ENCODE measurements at regions of chr17 and their contacts with region 1.

Region 1: GRCh38 chr17:82882715-82883418 is 43.0 kb upstream of the ZNF750 start:
- DNase-seq: no peak
- H3K4me3 ChIP-seq: no peak overlapping the region
- H3K27ac ChIP-seq: no peak overlapping the region
- H3K4me1 ChIP-seq: peaks cover 14% of the 10 kb centered on the region
- H3K27me3 ChIP-seq: no peaks in the 10 kb centered on the region
- CTCF ChIP-seq: no peak
- POLR2A ChIP-seq: no peak

Region 2: DNA sequence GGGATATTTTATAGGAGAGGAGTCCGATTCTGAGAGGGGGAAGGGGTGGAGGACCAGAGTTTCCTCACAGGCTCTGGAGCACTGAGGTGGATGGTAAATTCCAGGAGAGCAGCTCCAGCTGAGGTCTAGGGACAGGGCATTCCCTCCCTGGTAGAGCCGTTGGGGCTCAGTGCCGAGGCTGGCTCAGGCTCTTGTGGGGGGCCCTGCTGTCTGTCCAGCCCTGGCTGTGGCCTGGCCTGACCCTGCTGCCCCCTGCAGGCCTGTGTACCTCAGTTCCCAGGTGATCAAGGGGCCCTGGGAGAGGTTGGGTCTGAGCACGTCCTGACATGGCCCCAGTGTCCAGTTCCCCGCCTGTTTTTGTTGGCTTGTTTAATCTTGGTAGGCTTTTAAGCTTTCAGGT is 59.9 kb before region 1 on chr17:
- CTCF ChIA-PET with region 1: no interaction called
- POLR2A ChIA-PET with region 1: no interaction called
- dilution Hi-C with region 1: no loop called
- intact Hi-C with region 1: no loop called
- DNase-seq: no peak
- H3K4me3 ChIP-seq: no peak overlapping the region
- H3K27ac ChIP-seq: no peak overlapping the region
- H3K4me1 ChIP-seq: no peaks in the 10 kb centered on the region
- H3K27me3 ChIP-seq: no peaks in the 10 kb centered on the region
- CTCF ChIP-seq: peak; percentile 17 to 22
- POLR2A ChIP-seq: no peak

Region 3: GRCh38 chr17:82851381-82851780 is 31.5 kb before region 1 on chr17:
- CTCF ChIA-PET with region 1: no interaction called
- POLR2A ChIA-PET with region 1: no interaction called
- dilution Hi-C with region 1: no loop called
- intact Hi-C with region 1: no loop called
- DNase-seq: no peak
- H3K4me3 ChIP-seq: no peak overlapping the region
- H3K27ac ChIP-seq: no peak overlapping the region
- H3K4me1 ChIP-seq: peaks cover 19% of the 10 kb centered on the region
- H3K27me3 ChIP-seq: no peaks in the 10 kb centered on the region
- CTCF ChIP-seq: no peak
- POLR2A ChIP-seq: no peak

Region 4: DNA sequence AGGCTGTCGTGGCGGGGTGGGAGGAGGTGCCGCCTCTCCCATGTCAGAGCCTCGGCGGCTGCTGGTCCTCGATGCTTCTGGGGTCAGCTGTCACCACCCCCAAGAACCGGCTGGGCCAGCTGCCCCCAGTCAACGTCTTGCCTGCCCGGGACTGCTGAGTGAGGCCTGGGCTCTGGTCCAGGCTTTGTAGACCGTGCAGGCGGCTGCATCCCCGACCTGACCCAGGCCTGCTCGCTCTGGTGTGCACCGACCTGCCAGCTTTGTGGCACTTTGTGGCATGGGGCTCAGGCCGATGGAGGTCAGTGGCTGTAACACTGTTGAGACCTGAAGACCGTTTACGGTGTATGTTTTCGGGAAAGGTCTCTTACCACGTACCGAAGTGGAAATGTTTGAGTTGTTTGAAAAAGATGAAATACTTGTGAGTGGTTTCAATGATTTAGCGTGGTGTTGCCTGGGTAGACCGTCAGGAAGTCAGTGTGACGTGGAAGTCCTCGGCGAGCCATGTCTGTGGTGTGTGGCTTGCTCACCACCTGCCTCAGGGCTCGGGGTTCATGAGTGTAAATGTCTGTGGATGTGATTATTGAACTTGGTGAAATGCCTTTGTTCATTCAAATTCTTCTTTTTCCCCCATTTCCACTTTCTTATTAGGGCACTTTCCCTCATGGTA is 10.2 kb after region 1 on chr17:
- CTCF ChIA-PET with region 1: interaction called, 21 read pairs
- POLR2A ChIA-PET with region 1: no interaction called
- dilution Hi-C with region 1: no loop called
- intact Hi-C with region 1: no loop called
- DNase-seq: peak; percentile 47
- H3K4me3 ChIP-seq: no peak overlapping the region
- H3K27ac ChIP-seq: no peak overlapping the region
- H3K4me1 ChIP-seq: no peaks in the 10 kb centered on the region
- H3K27me3 ChIP-seq: no peaks in the 10 kb centered on the region
- CTCF ChIP-seq: no peak
- POLR2A ChIP-seq: no peak

Region 5: DNA sequence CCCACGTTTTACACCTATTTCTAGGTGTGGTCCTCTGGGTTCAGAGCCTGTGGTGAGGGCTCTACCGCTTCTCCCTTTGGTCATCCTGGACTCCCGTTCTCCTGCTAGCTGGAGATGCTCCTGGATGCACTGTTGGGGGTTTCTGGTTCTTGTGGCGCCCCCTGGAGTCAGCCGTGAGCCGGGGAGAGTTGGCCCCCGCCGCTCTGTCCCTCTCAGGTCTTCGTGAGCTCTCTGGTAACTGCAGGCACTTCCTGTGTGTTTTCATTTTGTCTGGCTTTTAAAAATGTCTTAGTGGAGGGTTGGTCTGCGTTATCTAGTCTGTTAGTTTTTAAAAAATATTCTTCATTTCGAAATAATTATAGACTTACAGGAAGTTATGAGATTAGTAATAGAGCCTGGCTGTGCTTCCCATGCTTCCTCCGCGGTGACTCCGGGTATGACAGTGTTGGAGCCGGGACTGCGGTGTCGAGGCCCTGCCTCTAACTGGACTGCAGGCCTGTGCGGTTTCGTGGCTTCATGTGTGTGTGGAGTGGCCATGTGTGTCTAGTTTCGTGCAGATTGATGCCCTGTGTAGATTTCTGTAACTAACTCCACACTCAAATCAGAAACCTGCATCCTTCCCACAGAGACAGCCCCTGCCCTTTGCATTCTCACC is 35.0 kb after region 1 on chr17:
- CTCF ChIA-PET with region 1: interaction called, 10 read pairs
- POLR2A ChIA-PET with region 1: no interaction called
- dilution Hi-C with region 1: no loop called
- intact Hi-C with region 1: no loop called
- DNase-seq: peak; percentile 21
- H3K4me3 ChIP-seq: no peak overlapping the region
- H3K27ac ChIP-seq: no peak overlapping the region
- H3K4me1 ChIP-seq: no peaks in the 10 kb centered on the region
- H3K27me3 ChIP-seq: no peaks in the 10 kb centered on the region
- CTCF ChIP-seq: peak; percentile 41 to 65
- POLR2A ChIP-seq: no peak

Region 6: GRCh38 chr17:82978765-82979349 is 96.0 kb after region 1 on chr17:
- CTCF ChIA-PET with region 1: no interaction called
- POLR2A ChIA-PET with region 1: no interaction called
- dilution Hi-C with region 1: no loop called
- intact Hi-C with region 1: no loop called
- DNase-seq: no peak
- H3K4me3 ChIP-seq: no peak overlapping the region
- H3K27ac ChIP-seq: no peak overlapping the region
- H3K4me1 ChIP-seq: no peaks in the 10 kb centered on the region
- H3K27me3 ChIP-seq: no peaks in the 10 kb centered on the region
- CTCF ChIP-seq: no peak
- POLR2A ChIP-seq: no peak